Left ventricle myocardium inferior (tissue), 1 donor: ENCODE measurements at regions of chr12 and their contacts with region 1.

Region 1: GRCh38 chr12:120797677-120798642 is 72.3 kb downstream of the ACADS start:
- DNase-seq: no peak
- H3K4me3 ChIP-seq: no peak overlapping the region
- H3K27ac ChIP-seq: no peak overlapping the region
- H3K4me1 ChIP-seq: peaks cover 39% of the 10 kb centered on the region
- H3K27me3 ChIP-seq: no peaks in the 10 kb centered on the region
- CTCF ChIP-seq: no peak

Region 2: GRCh38 chr12:120737557-120738251 is 60.3 kb before region 1 on chr12:
- intact Hi-C with region 1: loop called (anchors 2 kb)
- DNase-seq: no peak
- H3K4me3 ChIP-seq: no peak overlapping the region
- H3K27ac ChIP-seq: no peak overlapping the region
- H3K4me1 ChIP-seq: no peaks in the 10 kb centered on the region
- H3K27me3 ChIP-seq: no peaks in the 10 kb centered on the region
- CTCF ChIP-seq: peak; percentile 15